ENCODE measurements at regions of chr1 and their contacts with region 1.

Region 1: GRCh38 chr1:184563308-184563707 is 176.5 kb downstream of the C1orf21 start:
- DNase-seq: no peak

Region 2: GRCh38 chr1:184386312-184387068 is 176.8 kb before region 1 on chr1 and contains the start of gene C1orf21:
- intact Hi-C with region 1: loop called (anchors 5 to 10 kb)
- DNase-seq: peak; percentile 95
- total RNA-seq, gene C1orf21: 64.5 to 69.3 TPM